ENCODE measurements at regions of chr4 and their contacts with region 1.

Region 1: GRCh38 chr4:31741326-31741725 is 1021.2 kb downstream of the PCDH7 start:
- DNase-seq: no peak
- ATAC-seq: no peak
- H3K4me3 ChIP-seq: no peak overlapping the region
- H3K27ac ChIP-seq: no peak overlapping the region
- H3K4me1 ChIP-seq: no peaks in the 10 kb centered on the region
- H3K27me3 ChIP-seq: no peaks in the 10 kb centered on the region
- CTCF ChIP-seq: no peak
- POLR2A ChIP-seq: no peak
- RAD21 ChIP-seq: no peak

Region 2: GRCh38 chr4:31692402-31692940 is 48.9 kb before region 1 on chr4:
- CTCF ChIA-PET with region 1: no interaction called
- POLR2A ChIA-PET with region 1: no interaction called
- dilution Hi-C with region 1: no loop called
- in situ Hi-C with region 1: no loop called
- intact Hi-C with region 1: loop called (anchors 5 kb)
- DNase-seq: no peak
- ATAC-seq: 0 out of 2 replicates have a peak, but pooled peaks have one; percentile 29
- H3K4me3 ChIP-seq: no peak overlapping the region
- H3K27ac ChIP-seq: no peak overlapping the region
- H3K4me1 ChIP-seq: no peaks in the 10 kb centered on the region
- H3K27me3 ChIP-seq: no peaks in the 10 kb centered on the region
- CTCF ChIP-seq: 0 out of 2 replicates have a peak, but pooled peaks have one; percentile 21
- POLR2A ChIP-seq: no peak
- RAD21 ChIP-seq: 0 out of 2 replicates have a peak, but pooled peaks have one; percentile 17

Region 3: DNA sequence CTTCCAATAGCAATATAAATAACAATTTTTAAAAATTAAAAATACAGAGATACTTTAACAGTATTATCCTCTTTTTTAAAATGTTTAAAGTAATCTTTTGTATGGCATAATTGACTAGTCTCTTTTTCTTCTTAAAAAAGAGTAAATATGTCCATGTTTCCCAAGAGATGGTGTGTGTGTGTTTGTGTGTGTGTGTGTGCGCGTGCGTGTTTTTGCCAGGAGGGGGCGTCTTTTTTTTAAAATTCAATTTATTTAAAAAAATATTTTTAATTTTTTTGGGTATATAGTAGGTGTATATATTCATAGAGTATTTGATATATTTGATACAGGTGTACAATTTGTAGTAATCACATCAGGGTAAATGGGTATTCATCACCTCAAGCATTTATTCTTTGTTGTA is 52.6 kb after region 1 on chr4:
- CTCF ChIA-PET with region 1: no interaction called
- POLR2A ChIA-PET with region 1: no interaction called
- dilution Hi-C with region 1: no loop called
- in situ Hi-C with region 1: no loop called
- intact Hi-C with region 1: loop called (anchors 5 kb)
- DNase-seq: no peak
- ATAC-seq: no peak
- H3K4me3 ChIP-seq: no peak overlapping the region
- H3K27ac ChIP-seq: no peak overlapping the region
- H3K4me1 ChIP-seq: no peaks in the 10 kb centered on the region
- H3K27me3 ChIP-seq: no peaks in the 10 kb centered on the region
- CTCF ChIP-seq: peak; percentile 13; the same call in 1 of the 2 replicates
- POLR2A ChIP-seq: no peak
- RAD21 ChIP-seq: no peak